ENCODE measurements at regions of chr4 and their contacts with region 1.

Region 1: DNA sequence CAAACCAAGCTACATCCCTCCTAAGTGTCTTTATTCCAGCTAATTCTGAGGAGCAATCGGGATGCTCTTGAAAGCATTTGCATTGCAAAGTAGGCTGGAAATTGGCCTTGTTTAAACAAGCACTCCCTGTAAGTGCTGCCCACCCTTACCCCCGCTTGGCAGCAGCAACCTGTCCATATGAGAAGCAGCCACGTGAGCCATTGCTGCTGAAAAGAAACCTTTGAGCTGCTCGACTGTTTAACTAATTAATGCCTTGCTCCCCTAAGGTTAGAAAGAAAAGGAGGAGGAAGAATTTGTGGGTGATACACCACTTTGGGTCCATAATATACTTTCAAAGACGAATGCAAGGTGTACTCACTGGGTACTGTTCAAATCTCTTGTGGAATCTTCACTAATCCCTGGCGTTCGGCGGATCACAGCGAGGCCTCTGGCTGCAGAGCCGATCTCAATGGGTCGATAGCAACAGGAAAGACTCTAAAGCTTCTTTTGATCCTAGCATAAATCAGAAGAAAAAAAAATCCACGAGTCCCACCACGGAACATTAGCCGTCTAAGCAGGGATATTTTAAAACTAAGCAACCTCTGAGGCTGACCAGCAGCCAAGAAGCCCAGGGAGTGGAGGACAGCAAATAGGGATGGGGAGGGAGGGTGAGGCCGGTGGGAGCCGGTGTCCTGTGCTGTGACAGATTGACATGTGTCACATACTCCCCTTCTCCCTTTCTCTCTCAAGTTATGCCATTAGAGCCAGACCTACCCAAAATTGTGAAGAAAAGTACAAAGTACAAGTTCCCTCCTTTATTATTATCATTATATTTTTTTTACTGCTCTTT is 37.2 kb upstream of the MGST2 start:
- DNase-seq: no peak
- H3K4me3 ChIP-seq: no peak overlapping the region
- CTCF ChIP-seq: no peak

Region 2: GRCh38 chr4:139589336-139590018 is 38.9 kb before region 1 on chr4:
- in situ Hi-C with region 1: loop called (anchors 5 kb)
- DNase-seq: no peak
- H3K4me3 ChIP-seq: no peak overlapping the region
- CTCF ChIP-seq: no peak

Region 3: GRCh38 chr4:140037357-140038030 is 409.1 kb after region 1 on chr4:
- in situ Hi-C with region 1: no loop called
- DNase-seq: peak; percentile 84
- H3K4me3 ChIP-seq: no peak overlapping the region
- CTCF ChIP-seq: no peak

Measured in astrocyte of the cerebellum (primary cell).